ENCODE measurements at regions of chr19 and their contacts with region 1.

Region 1: DNA sequence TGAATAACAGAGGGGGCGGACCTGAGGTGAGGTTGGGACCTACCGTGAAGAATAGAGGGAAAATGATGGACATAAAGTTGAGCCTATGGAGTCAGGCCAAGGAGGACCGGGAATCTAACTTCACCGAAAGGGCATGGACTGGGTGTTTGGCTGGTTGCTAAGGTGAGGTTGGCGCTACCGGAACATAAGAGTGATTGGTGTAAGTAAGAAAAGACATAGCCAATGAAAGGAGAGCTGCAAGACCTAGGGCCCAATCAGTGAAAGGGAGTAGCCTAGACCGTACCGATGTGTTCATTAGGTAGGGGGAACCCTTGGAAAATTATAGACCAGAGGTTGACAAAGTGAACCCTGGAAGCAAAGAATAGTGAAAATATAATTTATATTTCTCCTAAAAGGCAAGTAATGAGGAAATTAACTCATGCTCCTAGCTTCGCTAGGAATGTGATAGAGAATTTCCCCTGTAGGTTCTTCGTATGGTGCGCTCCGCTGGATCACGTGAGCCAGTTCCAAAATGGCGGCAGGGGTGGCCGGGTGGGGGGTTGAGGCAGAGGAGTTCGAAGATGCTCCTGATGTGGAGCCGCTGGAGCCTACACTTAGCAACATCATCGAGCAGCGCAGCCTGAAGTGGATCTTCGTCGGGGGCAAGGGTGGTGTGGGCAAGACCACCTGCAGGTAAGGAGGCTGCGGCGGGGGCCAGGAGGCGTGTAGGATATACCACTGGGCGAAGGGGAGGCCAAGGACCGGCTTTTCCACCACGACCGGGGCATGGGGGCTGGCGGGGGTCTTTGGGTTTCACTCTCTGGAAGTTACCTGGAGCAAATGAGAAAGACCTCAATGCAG is at the start of gene GET3:
- DNase-seq: peak; percentile 93 to 95
- ATAC-seq: peak; percentile 93 to 94
- H3K4me3 ChIP-seq: peak within 1 kb of the TSS; percentile 76 to 95 (median 88)
- H3K27ac ChIP-seq: peak within 1 kb of the TSS; percentile 81 to 93 (median 86)
- H3K4me1 ChIP-seq: peaks cover 29 to 35% of the 10 kb centered on the region in 2 donors
- H3K27me3 ChIP-seq: no peaks in the 10 kb centered on the region
- CTCF ChIP-seq: peak in 1 of 5 experiments; percentile 41
- POLR2A ChIP-seq: no peak
- total RNA-seq, gene GET3: 52.6 to 85.1 (median 70.5) TPM

Region 2: GRCh38 chr19:12610540-12611360 is 126.5 kb before region 1 on chr19 and contains the starts of genes ZNF490 and ZNF791:
- in situ Hi-C with region 1: no loop called
- intact Hi-C with region 1: loop called (anchors 1 kb)
- DNase-seq: peak; percentile 99
- ATAC-seq: peak; percentile 99 to 100
- H3K4me3 ChIP-seq: peak within 1 kb of the TSS; percentile 81 to 100 (median 91)
- H3K27ac ChIP-seq: peak within 1 kb of the TSS; percentile 98 to 100 (median 99)
- H3K4me1 ChIP-seq: peaks cover 23 to 45% of the 10 kb centered on the region in 2 donors
- H3K27me3 ChIP-seq: no peaks in the 10 kb centered on the region
- CTCF ChIP-seq: no peak
- POLR2A ChIP-seq: peak; percentile 90 to 95
- total RNA-seq, gene ZNF490: 2.5 to 4.9 (median 2.9) TPM
- total RNA-seq, gene ZNF791: 7.6 to 10.9 (median 8.8) TPM

Region 3: DNA sequence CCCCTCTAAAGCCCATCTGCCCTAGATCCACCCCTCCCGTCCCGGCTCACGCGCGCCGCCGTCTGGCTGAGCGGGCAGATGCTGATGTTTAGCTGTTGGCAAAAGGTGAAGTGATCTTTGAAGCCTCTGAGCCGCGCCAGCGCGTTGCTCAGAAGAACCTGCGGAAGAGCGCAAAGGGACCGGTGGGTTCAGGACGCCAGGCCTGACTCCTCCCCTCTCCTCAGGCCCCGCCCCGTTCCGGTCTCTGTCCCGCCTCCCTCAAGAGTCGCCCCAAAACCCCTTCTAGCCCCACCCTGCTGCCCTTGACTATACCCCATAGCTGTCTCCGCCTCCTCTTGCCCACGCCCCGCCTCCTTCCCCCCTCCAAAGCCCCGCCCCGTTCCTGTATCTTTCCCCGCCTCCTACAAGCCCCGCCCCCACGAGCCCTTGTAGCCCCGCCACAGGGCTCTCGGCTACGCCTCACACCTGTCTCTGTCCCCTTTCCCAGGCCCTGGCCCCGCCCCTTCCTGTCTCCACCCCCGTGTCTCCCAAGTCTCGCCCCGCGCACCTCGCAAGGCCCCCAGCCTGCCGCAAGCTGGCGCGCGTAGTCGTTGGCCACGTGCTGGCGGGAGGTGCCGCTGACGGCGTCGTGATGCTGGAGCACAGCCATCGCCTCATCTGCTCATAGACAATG is 80.2 kb before region 1 on chr19:
- in situ Hi-C with region 1: no loop called
- intact Hi-C with region 1: no loop called
- DNase-seq: no peak
- ATAC-seq: no peak
- H3K4me3 ChIP-seq: no peak overlapping the region
- H3K27ac ChIP-seq: no peak overlapping the region
- H3K4me1 ChIP-seq: no peaks in the 10 kb centered on the region
- H3K27me3 ChIP-seq: no peaks in the 10 kb centered on the region
- CTCF ChIP-seq: no peak
- POLR2A ChIP-seq: no peak

Region 4: GRCh38 chr19:12669270-12670158 is 67.7 kb before region 1 on chr19:
- in situ Hi-C with region 1: no loop called
- intact Hi-C with region 1: no loop called
- DNase-seq: peak; percentile 58 to 70
- ATAC-seq: peak; percentile 80 to 85
- H3K4me3 ChIP-seq: peak overlapping the region; percentile 79 to 99 (median 94)
- H3K27ac ChIP-seq: peak overlapping the region; percentile 95 to 99 (median 98)
- H3K4me1 ChIP-seq: peaks cover 33 to 36% of the 10 kb centered on the region in 2 donors
- H3K27me3 ChIP-seq: no peaks in the 10 kb centered on the region
- CTCF ChIP-seq: no peak
- POLR2A ChIP-seq: peak in 1 of 2 donors; percentile 47

Region 5: DNA sequence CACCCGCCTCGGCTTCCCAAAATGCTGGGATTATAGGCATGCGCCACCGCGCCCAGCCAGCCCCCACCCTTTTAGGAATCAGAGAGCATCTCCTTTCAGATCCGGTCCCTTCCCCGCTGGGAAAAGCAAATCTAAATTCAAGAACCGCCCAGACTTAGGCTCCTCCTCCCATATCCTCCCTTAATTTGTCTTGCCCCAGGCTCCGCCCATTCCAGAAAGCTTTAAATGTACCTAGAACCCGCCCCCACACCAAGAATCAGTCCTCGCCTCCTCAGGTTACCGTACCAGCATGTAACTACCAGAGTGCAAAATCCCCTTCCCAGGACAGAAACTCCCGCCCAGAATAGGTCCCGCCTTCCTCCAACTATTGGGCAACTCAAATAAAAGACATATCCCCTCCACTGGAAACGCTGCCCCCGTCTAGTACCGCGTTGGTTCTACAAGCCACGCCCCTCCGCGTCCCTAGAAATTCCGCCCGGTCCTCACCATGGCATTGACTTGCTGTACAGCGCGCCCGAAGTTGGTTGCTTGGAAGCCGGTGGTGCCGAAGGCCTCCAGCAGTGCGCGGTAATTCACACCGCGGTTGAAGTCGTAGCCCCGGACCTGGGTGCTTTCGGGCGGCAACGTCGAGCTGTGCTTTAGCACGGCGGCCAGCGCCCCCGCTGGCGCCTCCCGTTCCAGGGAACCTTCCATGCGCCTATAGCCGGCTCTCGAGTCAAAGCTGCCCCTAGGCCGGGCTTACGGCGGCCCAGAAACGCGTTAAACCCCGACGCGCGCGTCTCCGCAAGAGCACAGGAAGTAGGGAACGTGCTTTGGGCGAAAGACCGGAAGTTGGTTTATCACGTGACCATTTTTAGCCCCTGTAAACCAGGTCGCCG is 55.9 kb before region 1 on chr19 and contains the start of gene DHPS:
- in situ Hi-C with region 1: no loop called
- intact Hi-C with region 1: loop called (anchors 2 kb)
- DNase-seq: peak; percentile 94
- ATAC-seq: peak; percentile 95 to 97
- H3K4me3 ChIP-seq: peak within 1 kb of the TSS; percentile 88 to 99 (median 99)
- H3K27ac ChIP-seq: peak within 1 kb of the TSS; percentile 94 to 99 (median 96)
- H3K4me1 ChIP-seq: peaks cover 4 to 16% of the 10 kb centered on the region in 2 donors
- H3K27me3 ChIP-seq: no peaks in the 10 kb centered on the region
- CTCF ChIP-seq: peak in 2 of 5 experiments; percentile 26 to 41
- POLR2A ChIP-seq: peak; percentile 45 to 70
- total RNA-seq, gene DHPS: 115 to 184 (median 127) TPM

Region 6: DNA sequence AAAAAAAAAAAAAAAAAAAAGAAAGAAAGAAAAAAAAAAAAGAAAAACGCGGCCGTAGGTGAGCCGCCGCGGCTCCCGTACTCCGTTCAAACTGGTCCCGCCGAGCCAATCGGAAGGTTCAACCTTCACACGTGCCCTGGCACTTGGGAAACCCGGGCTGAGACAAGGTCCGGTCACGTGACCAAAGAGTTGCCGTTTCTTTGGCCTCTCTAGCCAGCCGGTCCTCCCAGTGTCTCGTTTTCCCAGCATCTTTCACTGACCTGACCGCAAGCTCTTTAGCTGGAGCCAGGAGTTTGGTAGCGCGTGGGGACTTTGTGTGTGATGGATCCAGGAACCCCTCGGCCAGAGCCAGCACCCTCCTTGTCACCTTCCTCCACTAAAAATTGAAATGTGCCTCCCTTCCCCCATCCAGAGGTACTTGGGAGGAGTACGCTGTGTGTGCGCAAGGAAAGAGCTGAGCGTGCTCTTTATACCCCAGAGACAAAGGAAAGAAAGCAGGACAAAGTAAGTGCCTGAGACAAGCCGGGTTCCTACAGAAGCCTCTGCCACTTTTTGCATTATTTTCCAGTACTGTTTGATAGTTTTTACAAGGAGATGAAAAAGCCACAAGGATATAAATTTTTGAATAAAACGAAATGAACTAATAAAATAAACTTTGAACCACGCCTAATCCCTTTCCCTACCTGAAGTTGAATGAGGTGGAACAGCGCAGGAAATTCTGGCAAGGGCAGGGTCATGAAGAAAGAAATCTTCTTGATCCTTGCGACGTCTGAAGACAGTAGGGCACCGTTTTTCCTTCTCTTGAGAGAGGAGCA is 14.4 kb before region 1 on chr19:
- in situ Hi-C with region 1: no loop called
- intact Hi-C with region 1: loop called (anchors 1 kb)
- DNase-seq: peak; percentile 98 to 99
- ATAC-seq: peak; percentile 96
- H3K4me3 ChIP-seq: peak overlapping the region; percentile 72 to 83 (median 76)
- H3K27ac ChIP-seq: peak overlapping the region; percentile 87 to 99 (median 94)
- H3K4me1 ChIP-seq: peaks cover 26 to 29% of the 10 kb centered on the region in 2 donors
- H3K27me3 ChIP-seq: no peaks in the 10 kb centered on the region
- CTCF ChIP-seq: peak in 1 of 5 experiments; percentile 42
- POLR2A ChIP-seq: peak; percentile 30 to 35

Region 7: GRCh38 chr19:12859546-12859945 is 122.3 kb after region 1 on chr19:
- in situ Hi-C with region 1: no loop called
- intact Hi-C with region 1: no loop called
- DNase-seq: no peak
- ATAC-seq: no peak
- H3K4me3 ChIP-seq: no peak overlapping the region
- H3K27ac ChIP-seq: no peak overlapping the region
- H3K4me1 ChIP-seq: no peaks in the 10 kb centered on the region
- H3K27me3 ChIP-seq: peaks cover 0 to 2% (median 0%) of the 10 kb centered on the region in 3 donors
- CTCF ChIP-seq: no peak
- POLR2A ChIP-seq: no peak

Region 8: GRCh38 chr19:13117772-13118423 is 380.7 kb after region 1 on chr19 and contains the start of gene NACC1:
- in situ Hi-C with region 1: no loop called
- intact Hi-C with region 1: loop called (anchors 10 kb)
- DNase-seq: peak; percentile 82 to 88
- ATAC-seq: peak; percentile 82 to 83
- H3K4me3 ChIP-seq: peak within 1 kb of the TSS; percentile 90 to 100 (median 94)
- H3K27ac ChIP-seq: peak within 1 kb of the TSS; percentile 79 to 93 (median 86)
- H3K4me1 ChIP-seq: peaks cover 28 to 36% of the 10 kb centered on the region in 2 donors
- H3K27me3 ChIP-seq: no peaks in the 10 kb centered on the region
- CTCF ChIP-seq: peak in 1 of 5 experiments; percentile 11
- POLR2A ChIP-seq: no peak
- total RNA-seq, gene NACC1: 36.3 to 81.3 (median 49.4) TPM

Region 9: DNA sequence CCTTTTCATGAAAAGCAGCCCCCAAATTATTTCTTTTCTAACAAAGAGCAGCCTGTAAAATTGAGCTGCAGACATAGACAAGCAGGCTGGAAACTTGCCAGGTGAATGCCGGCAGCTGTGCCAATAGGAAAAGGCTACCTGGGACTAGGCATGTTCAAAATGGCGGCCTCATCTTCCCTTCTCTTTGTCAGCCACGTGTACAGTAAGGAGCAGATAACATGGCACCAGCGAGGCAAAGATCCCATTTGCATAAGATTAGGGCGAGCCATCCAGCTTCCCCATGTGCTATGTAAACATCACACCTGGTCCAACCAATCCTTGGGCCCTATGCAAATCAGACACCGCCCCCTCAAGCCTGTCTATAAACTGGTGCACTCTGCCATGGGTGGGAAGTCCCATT is 800.2 kb after region 1 on chr19:
- in situ Hi-C with region 1: no loop called
- intact Hi-C with region 1: no loop called
- DNase-seq: no peak
- ATAC-seq: no peak
- H3K4me3 ChIP-seq: no peak overlapping the region
- H3K27ac ChIP-seq: no peak overlapping the region
- H3K4me1 ChIP-seq: no peaks in the 10 kb centered on the region
- H3K27me3 ChIP-seq: no peaks in the 10 kb centered on the region
- CTCF ChIP-seq: no peak
- POLR2A ChIP-seq: no peak